ENCODE measurements at regions of chr5 and their contacts with region 1.

Region 1: DNA sequence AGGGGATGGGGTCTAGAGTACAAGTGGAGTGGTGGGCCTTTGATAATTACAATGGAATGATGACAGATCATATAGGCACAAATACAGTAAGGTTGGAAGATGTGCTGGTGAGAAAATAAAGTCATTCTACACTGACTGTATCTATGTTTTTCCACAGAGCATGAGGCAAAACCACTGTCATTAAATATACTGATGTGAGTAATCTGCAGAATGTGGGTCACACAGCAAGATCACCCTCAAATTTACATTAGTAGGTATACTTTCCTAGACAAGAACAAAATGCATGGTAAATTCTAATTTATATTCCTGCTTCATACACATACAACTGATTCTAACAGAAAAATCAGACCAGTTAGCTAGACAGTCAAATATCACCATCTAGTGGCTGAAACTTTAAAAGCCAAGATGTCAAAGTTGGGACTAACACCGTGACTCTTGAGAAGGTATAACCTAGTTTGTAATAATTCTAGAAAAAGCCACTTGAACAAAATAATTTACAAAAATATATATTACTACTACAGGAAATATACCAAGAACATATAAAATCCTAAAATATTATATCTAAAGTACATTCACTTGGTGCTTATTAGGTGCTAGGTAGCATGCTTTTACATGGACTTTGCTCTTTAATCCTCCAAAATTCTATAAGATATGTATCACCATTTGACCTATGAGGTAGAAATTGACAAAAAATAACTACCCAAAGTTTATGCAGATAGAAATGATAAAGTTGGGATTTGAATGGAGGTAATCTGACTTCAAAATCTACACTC is 19.5 kb downstream of the TTC33 start:
- DNase-seq: peak; percentile 84
- H3K4me3 ChIP-seq: no peak overlapping the region
- H3K27ac ChIP-seq: peak overlapping the region; percentile 84
- H3K4me1 ChIP-seq: peaks cover 36% of the 10 kb centered on the region
- H3K27me3 ChIP-seq: no peaks in the 10 kb centered on the region
- CTCF ChIP-seq: peak; percentile 40 to 50
- POLR2A ChIP-seq: no peak

Region 2: GRCh38 chr5:39578887-39579497 is 1157.3 kb before region 1 on chr5:
- CTCF ChIA-PET with region 1: interaction called, 13 read pairs
- POLR2A ChIA-PET with region 1: no interaction called
- dilution Hi-C with region 1: no loop called
- intact Hi-C with region 1: loop called (anchors 1 kb)
- DNase-seq: peak; percentile 38
- H3K4me3 ChIP-seq: no peak overlapping the region
- H3K27ac ChIP-seq: no peak overlapping the region
- H3K4me1 ChIP-seq: peaks cover 4% of the 10 kb centered on the region
- H3K27me3 ChIP-seq: no peaks in the 10 kb centered on the region
- CTCF ChIP-seq: peak; percentile 18
- POLR2A ChIP-seq: no peak

Region 3: GRCh38 chr5:39714036-39714698 is 1022.1 kb before region 1 on chr5:
- CTCF ChIA-PET with region 1: interaction called, 72 read pairs
- POLR2A ChIA-PET with region 1: no interaction called
- dilution Hi-C with region 1: no loop called
- intact Hi-C with region 1: loop called (anchors 1 kb)
- DNase-seq: peak; percentile 84
- H3K4me3 ChIP-seq: no peak overlapping the region
- H3K27ac ChIP-seq: no peak overlapping the region
- H3K4me1 ChIP-seq: no peaks in the 10 kb centered on the region
- H3K27me3 ChIP-seq: no peaks in the 10 kb centered on the region
- CTCF ChIP-seq: peak; percentile 42 to 65
- POLR2A ChIP-seq: no peak

Region 4: GRCh38 chr5:39800042-39800601 is 936.2 kb before region 1 on chr5:
- CTCF ChIA-PET with region 1: no interaction called
- POLR2A ChIA-PET with region 1: no interaction called
- dilution Hi-C with region 1: no loop called
- intact Hi-C with region 1: no loop called
- DNase-seq: peak; percentile 40
- H3K4me3 ChIP-seq: no peak overlapping the region
- H3K27ac ChIP-seq: no peak overlapping the region
- H3K4me1 ChIP-seq: no peaks in the 10 kb centered on the region
- H3K27me3 ChIP-seq: peaks cover 0 to 3% of the 10 kb centered on the region in 2 experiments
- CTCF ChIP-seq: no peak
- POLR2A ChIP-seq: no peak

Region 5: DNA sequence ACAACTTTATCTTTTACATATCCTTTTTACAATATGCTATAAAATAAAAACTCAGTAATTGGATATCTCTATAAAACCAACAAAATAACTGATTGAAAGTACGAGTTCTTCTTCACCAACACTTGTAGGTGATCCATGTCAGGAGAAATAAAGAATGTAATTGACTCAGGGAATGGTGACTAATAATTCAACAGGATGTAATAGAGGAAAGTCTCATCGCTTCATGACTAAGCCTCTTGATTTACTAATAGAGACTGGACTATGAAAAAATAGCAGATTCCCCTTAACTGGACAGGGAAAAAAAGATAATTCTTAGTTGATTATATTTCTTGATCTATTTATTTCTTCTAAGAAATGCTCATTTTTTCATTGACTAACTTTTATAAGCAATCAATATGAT is 564.3 kb before region 1 on chr5:
- CTCF ChIA-PET with region 1: interaction called, 22 read pairs
- POLR2A ChIA-PET with region 1: no interaction called
- dilution Hi-C with region 1: no loop called
- intact Hi-C with region 1: loop called (anchors 5 kb)
- DNase-seq: peak; percentile 82
- H3K4me3 ChIP-seq: no peak overlapping the region
- H3K27ac ChIP-seq: no peak overlapping the region
- H3K4me1 ChIP-seq: peaks cover 17% of the 10 kb centered on the region
- H3K27me3 ChIP-seq: no peaks in the 10 kb centered on the region
- CTCF ChIP-seq: no peak
- POLR2A ChIP-seq: no peak

Region 6: DNA sequence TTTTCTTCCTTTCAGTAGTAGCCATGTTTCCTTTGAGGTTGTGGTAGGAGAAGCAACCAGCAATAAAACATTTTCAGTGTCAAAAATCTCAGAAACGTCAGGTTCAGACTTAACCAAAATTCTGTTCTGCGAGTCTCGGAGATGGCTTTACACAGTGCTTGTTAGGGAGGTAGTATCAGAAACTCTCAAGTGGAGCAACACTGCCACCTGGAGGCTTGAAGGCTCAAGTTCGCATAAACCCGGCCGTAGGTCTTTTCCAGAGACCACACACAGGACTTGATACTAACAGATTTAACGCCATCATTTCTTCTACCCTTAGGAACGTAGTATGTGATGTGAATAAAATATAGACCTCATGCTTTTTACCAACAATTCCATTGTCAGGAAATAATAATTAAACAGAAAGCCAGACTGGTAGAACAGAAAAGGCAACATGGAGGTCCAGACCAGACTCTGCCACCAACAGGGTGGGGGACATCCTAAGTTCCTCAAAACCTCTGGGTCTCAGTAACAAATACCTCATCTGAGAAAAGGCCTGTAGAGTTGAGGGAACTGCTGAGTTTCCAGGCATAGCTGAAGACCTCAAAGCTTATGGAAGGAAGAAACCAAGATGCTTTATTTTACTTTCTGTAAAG is 48.0 kb before region 1 on chr5:
- CTCF ChIA-PET with region 1: interaction called, 26 read pairs
- POLR2A ChIA-PET with region 1: no interaction called
- dilution Hi-C with region 1: no loop called
- intact Hi-C with region 1: loop called (anchors 1 kb)
- DNase-seq: peak; percentile 94
- H3K4me3 ChIP-seq: peak overlapping the region in 1 of 3 experiments; percentile 14
- H3K27ac ChIP-seq: peak overlapping the region; percentile 83
- H3K4me1 ChIP-seq: peaks cover 64% of the 10 kb centered on the region
- H3K27me3 ChIP-seq: no peaks in the 10 kb centered on the region
- CTCF ChIP-seq: peak; percentile 68 to 78
- POLR2A ChIP-seq: no peak

Region 7: GRCh38 chr5:41172012-41172411 is 435.7 kb after region 1 on chr5:
- CTCF ChIA-PET with region 1: no interaction called
- POLR2A ChIA-PET with region 1: no interaction called
- dilution Hi-C with region 1: no loop called
- intact Hi-C with region 1: no loop called
- DNase-seq: no peak
- H3K4me3 ChIP-seq: no peak overlapping the region
- H3K27ac ChIP-seq: no peak overlapping the region
- H3K4me1 ChIP-seq: no peaks in the 10 kb centered on the region
- H3K27me3 ChIP-seq: no peaks in the 10 kb centered on the region
- CTCF ChIP-seq: no peak
- POLR2A ChIP-seq: no peak